ENCODE measurements at regions of chr17 and their contacts with region 1.

Region 1: GRCh38 chr17:67431249-67432048 is 54.4 kb downstream of the PITPNC1 start:
- DNase-seq: peak in 3 of 9 experiments; percentile 26 to 55 (median 27)
- ATAC-seq: no peak
- H3K4me3 ChIP-seq: no peak overlapping the region
- H3K4me3 Mint-ChIP-seq: no peak overlapping the region
- H3K27ac ChIP-seq: peak overlapping the region in 1 of 2 experiments; percentile 40
- H3K27ac Mint-ChIP-seq: peak overlapping the region; percentile 67
- H3K4me1 ChIP-seq: peaks cover 54% of the 10 kb centered on the region
- H3K4me1 Mint-ChIP-seq: peaks cover 72% of the 10 kb centered on the region
- H3K27me3 ChIP-seq: no peaks in the 10 kb centered on the region
- H3K27me3 Mint-ChIP-seq: no peaks in the 10 kb centered on the region
- CTCF ChIP-seq: no peak

Region 2: DNA sequence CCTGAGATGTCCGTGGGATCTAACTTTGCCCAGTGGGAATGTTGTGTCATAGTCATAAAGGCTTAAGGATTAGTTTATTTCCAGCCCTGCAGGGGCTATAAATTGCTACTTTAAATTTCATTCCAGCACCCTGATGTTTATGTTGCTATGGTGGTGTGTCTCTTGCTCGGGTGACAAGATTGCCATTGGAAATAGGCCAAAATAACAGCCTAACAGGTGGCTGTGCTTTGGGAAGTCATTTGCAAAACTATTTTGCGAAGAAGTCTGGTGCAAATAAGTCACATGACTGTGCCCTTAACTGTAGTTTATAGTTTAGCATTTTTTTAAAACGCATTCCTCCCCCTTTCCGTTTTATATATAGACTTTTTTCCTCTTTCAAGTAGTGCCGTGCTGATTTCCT is 31.3 kb before region 1 on chr17:
- CTCF ChIA-PET with region 1: interaction called, 4 read pairs
- POLR2A ChIA-PET with region 1: interaction called, 6 read pairs
- intact Hi-C with region 1: loop called in 1 of 2 experiments (anchors 5 kb)
- DNase-seq: peak in 2 of 9 experiments; percentile 55 to 81
- ATAC-seq: peak; percentile 24
- H3K4me3 ChIP-seq: peak overlapping the region in 1 of 2 experiments; percentile 8
- H3K4me3 Mint-ChIP-seq: peak overlapping the region; percentile 71
- H3K27ac ChIP-seq: peak overlapping the region; percentile 39 to 78
- H3K27ac Mint-ChIP-seq: peak overlapping the region; percentile 92
- H3K4me1 ChIP-seq: peaks cover 76% of the 10 kb centered on the region
- H3K4me1 Mint-ChIP-seq: peaks cover 82% of the 10 kb centered on the region
- H3K27me3 ChIP-seq: no peaks in the 10 kb centered on the region
- H3K27me3 Mint-ChIP-seq: no peaks in the 10 kb centered on the region
- CTCF ChIP-seq: no peak

Region 3: DNA sequence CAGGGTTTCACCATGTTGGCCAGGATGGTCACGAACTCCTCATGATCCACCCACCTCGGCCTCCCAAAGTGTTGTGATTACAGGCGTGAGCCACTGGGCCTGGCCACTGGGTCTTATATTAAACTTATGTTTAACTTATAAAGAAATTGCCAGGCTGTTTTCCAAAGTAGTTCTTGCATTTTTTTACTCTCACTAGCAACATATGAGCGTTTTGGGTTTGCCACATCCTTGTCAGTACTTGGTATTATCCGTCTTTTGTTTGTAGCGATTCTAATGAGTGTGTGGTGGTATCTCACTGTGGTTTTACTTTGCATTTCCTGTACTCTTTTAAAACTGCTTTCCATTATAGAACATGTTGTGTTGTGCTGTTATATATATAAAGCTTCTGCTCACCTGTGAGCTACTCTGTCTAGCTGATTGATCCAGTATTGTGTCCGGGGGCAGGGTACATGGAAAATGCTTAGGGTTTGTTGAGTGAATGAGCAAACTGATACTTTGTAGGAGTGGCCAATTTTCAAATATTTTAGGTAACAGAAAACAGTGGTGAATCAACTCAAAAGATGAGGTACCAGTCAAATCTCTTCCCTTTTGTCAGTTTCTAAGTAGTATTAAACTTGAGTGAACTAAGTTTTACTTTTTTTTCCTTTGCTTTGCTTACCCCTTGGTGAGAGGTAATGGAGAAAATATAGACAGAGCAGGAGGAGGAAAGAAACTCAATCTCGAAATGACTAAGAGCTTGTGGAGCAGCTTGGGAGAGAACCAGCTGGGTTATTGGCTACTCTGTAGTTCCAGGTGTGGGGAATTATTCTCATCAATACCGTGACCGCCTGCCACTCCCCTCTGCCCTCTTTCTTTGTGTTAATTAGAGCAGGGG is 21.5 kb after region 1 on chr17:
- CTCF ChIA-PET with region 1: interaction called, 3 read pairs
- POLR2A ChIA-PET with region 1: interaction called, 7 read pairs
- intact Hi-C with region 1: loop called in 1 of 2 experiments (anchors 2 kb)
- DNase-seq: peak in 4 of 9 experiments; percentile 50 to 89 (median 66)
- ATAC-seq: peak; percentile 79
- H3K4me3 ChIP-seq: peak overlapping the region in 1 of 2 experiments; percentile 15
- H3K4me3 Mint-ChIP-seq: peak overlapping the region; percentile 77
- H3K27ac ChIP-seq: peak overlapping the region; percentile 59 to 72
- H3K27ac Mint-ChIP-seq: peak overlapping the region; percentile 97
- H3K4me1 ChIP-seq: peaks cover 91% of the 10 kb centered on the region
- H3K4me1 Mint-ChIP-seq: peaks cover 93% of the 10 kb centered on the region
- H3K27me3 ChIP-seq: no peaks in the 10 kb centered on the region
- H3K27me3 Mint-ChIP-seq: no peaks in the 10 kb centered on the region
- CTCF ChIP-seq: no peak

Measured in CD8-positive, alpha-beta T cell (primary cell).